Gastrocnemius medialis (tissue), 4 donors: ENCODE measurements at regions of chr6 and their contacts with region 1.

Region 1: GRCh38 chr6:116531675-116532570 is 13.6 kb downstream of the TRAPPC3L start:
- DNase-seq: peak; percentile 4 to 25
- ATAC-seq: peak; percentile 82 to 89
- H3K4me3 ChIP-seq: no peak overlapping the region
- H3K27ac ChIP-seq: no peak overlapping the region
- H3K4me1 ChIP-seq: peaks cover 0 to 8% of the 10 kb centered on the region in 2 donors
- H3K27me3 ChIP-seq: no peaks in the 10 kb centered on the region
- CTCF ChIP-seq: peak; percentile 70 to 86 (median 73)
- POLR2A ChIP-seq: no peak

Region 2: DNA sequence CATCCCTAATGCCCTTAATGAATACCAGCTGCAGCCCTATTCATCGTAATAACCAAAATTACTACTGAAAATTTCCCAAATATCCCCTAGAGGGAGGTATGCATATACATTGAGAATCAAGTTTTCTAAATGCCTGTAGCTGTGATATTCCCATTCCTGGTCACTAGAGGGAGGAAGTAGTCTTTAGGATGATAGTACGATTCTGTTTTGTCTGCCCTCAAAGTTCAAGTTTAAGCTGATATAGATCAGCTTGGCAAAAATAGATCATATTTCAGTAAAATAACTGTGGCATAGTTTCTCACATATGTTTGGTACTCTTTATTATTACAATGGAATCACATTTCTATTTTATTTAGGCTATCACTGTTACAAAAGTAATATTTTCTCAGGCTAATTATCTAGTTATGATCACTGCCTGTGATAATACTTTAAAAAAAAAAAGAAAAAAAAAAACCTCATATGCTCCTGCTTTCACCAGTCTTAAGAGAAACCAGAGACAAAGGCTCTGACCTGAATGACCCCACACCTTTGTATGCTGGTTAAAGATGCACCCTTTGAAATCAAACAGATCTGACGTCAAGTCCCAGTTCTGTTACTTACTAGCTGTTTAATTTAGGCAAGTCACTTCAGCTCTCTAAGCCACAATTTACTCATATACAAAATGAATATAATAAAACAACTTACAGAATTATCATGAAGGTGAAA is 263.2 kb before region 1 on chr6:
- in situ Hi-C with region 1: loop called in 3 of 4 experiments (anchors 5 to 10 kb)
- intact Hi-C with region 1: no loop called
- DNase-seq: no peak
- ATAC-seq: peak in 1 of 2 donors; percentile 61
- H3K4me3 ChIP-seq: no peak overlapping the region
- H3K27ac ChIP-seq: peak overlapping the region in 1 of 4 donors; percentile 6
- H3K4me1 ChIP-seq: peaks cover 23 to 33% of the 10 kb centered on the region in 2 donors
- H3K27me3 ChIP-seq: no peaks in the 10 kb centered on the region
- CTCF ChIP-seq: peak; percentile 38 to 66 (median 48)
- POLR2A ChIP-seq: no peak

Region 3: GRCh38 chr6:116287689-116288282 is 244.1 kb before region 1 on chr6:
- in situ Hi-C with region 1: loop called in 2 of 4 experiments (anchors 5 to 25 kb)
- intact Hi-C with region 1: loop called (anchors 1 kb)
- DNase-seq: no peak
- ATAC-seq: peak; percentile 79 to 80
- H3K4me3 ChIP-seq: no peak overlapping the region
- H3K27ac ChIP-seq: no peak overlapping the region
- H3K4me1 ChIP-seq: peaks cover 0 to 4% of the 10 kb centered on the region in 2 donors
- H3K27me3 ChIP-seq: no peaks in the 10 kb centered on the region
- CTCF ChIP-seq: peak; percentile 66 to 87 (median 86)
- POLR2A ChIP-seq: no peak

Region 4: GRCh38 chr6:116371120-116371917 is 160.6 kb before region 1 on chr6:
- in situ Hi-C with region 1: no loop called
- intact Hi-C with region 1: loop called (anchors 5 kb)
- DNase-seq: peak; percentile 45 to 67
- ATAC-seq: peak; percentile 62 to 70
- H3K4me3 ChIP-seq: peak overlapping the region; percentile 80 to 89 (median 88)
- H3K27ac ChIP-seq: peak overlapping the region; percentile 86 to 91 (median 89)
- H3K4me1 ChIP-seq: peaks cover 4 to 18% of the 10 kb centered on the region in 2 donors
- H3K27me3 ChIP-seq: no peaks in the 10 kb centered on the region
- CTCF ChIP-seq: no peak
- POLR2A ChIP-seq: peak in 1 of 2 donors; percentile 25

Region 5: GRCh38 chr6:116561377-116562018 is 29.6 kb after region 1 on chr6:
- in situ Hi-C with region 1: no loop called
- intact Hi-C with region 1: loop called (anchors 1 kb)
- DNase-seq: peak; percentile 32 to 54
- ATAC-seq: peak; percentile 64 to 80
- H3K4me3 ChIP-seq: peak overlapping the region; percentile 31 to 51 (median 38)
- H3K27ac ChIP-seq: peak overlapping the region in 2 of 4 donors; percentile 50 to 55
- H3K4me1 ChIP-seq: peaks cover 0 to 23% of the 10 kb centered on the region in 2 donors
- H3K27me3 ChIP-seq: no peaks in the 10 kb centered on the region
- CTCF ChIP-seq: peak; percentile 71 to 94 (median 85)
- POLR2A ChIP-seq: no peak

Region 6: GRCh38 chr6:116648156-116648555 is 116.2 kb after region 1 on chr6:
- in situ Hi-C with region 1: no loop called
- intact Hi-C with region 1: loop called (anchors 10 kb)
- DNase-seq: no peak
- ATAC-seq: no peak
- H3K4me3 ChIP-seq: no peak overlapping the region
- H3K27ac ChIP-seq: no peak overlapping the region
- H3K4me1 ChIP-seq: no peaks in the 10 kb centered on the region
- H3K27me3 ChIP-seq: no peaks in the 10 kb centered on the region
- CTCF ChIP-seq: no peak
- POLR2A ChIP-seq: no peak

Region 7: GRCh38 chr6:117110737-117111136 is 578.8 kb after region 1 on chr6:
- in situ Hi-C with region 1: no loop called
- intact Hi-C with region 1: no loop called
- DNase-seq: no peak
- ATAC-seq: no peak
- H3K4me3 ChIP-seq: no peak overlapping the region
- H3K27ac ChIP-seq: no peak overlapping the region
- H3K4me1 ChIP-seq: no peaks in the 10 kb centered on the region
- H3K27me3 ChIP-seq: no peaks in the 10 kb centered on the region
- CTCF ChIP-seq: no peak
- POLR2A ChIP-seq: no peak